ENCODE measurements at regions of chr9 and their contacts with region 1.

Region 1: GRCh38 chr9:87991141-87991870 is 17.0 kb upstream of the CDK20 start:
- DNase-seq: no peak
- H3K4me3 ChIP-seq: no peak overlapping the region
- H3K27ac ChIP-seq: no peak overlapping the region
- H3K4me1 ChIP-seq: no peaks in the 10 kb centered on the region
- H3K27me3 ChIP-seq: no peaks in the 10 kb centered on the region
- CTCF ChIP-seq: no peak
- POLR2A ChIP-seq: no peak

Region 2: DNA sequence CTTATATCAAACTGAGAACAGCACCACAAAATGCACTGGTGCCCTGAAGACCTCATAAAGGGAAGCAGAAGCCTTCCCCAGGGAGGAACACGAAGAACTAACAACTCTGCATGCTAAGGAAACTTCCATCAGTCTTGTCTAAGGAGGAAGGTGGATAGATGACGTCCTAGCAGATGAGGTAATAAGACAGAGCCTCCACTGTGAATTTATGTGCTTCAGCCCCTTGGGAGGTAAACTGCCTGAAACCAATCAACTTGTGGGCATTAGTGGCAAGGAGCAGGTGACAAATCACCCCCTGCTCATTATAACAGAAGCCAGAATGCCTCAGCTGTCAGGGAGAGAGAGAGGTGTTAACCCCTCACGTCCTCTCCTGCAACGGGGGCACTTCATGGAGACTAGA is 348.0 kb after region 1 on chr9:
- intact Hi-C with region 1: loop called (anchors 5 kb)
- DNase-seq: no peak
- H3K4me3 ChIP-seq: no peak overlapping the region
- H3K27ac ChIP-seq: no peak overlapping the region
- H3K4me1 ChIP-seq: no peaks in the 10 kb centered on the region
- H3K27me3 ChIP-seq: no peaks in the 10 kb centered on the region
- CTCF ChIP-seq: no peak
- POLR2A ChIP-seq: no peak

Region 3: GRCh38 chr9:89149726-89150125 is 1158.4 kb after region 1 on chr9:
- intact Hi-C with region 1: loop called (anchors 5 kb)
- DNase-seq: no peak
- H3K4me3 ChIP-seq: no peak overlapping the region
- H3K27ac ChIP-seq: no peak overlapping the region
- H3K4me1 ChIP-seq: no peaks in the 10 kb centered on the region
- H3K27me3 ChIP-seq: no peaks in the 10 kb centered on the region
- CTCF ChIP-seq: no peak
- POLR2A ChIP-seq: no peak